ENCODE measurements at regions of chr9 and their contacts with region 1.

Region 1: GRCh38 chr9:79974806-79975422 is 403.1 kb downstream of the TLE4 start:
- DNase-seq: no peak
- ATAC-seq: no peak

Region 2: DNA sequence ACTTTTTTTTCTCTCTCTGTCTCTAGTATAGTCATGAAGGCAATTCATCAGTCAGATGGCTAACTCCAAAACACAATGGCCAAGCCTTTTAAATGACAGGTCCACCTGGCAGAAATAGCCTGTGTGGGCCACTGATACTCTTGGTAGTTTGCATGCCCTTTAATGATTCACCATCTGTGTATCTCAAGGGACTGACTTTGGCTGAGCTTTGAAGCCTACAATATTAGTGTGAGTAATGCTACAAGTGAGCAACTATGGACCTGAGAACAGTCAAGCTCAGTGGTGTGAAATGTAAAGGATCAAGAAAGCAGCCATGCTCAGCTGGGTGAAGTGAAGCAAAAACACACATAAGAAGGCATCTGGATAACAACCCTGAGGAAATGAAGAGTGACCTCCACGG is 1207.5 kb after region 1 on chr9:
- intact Hi-C with region 1: loop called (anchors 5 kb)
- DNase-seq: no peak
- ATAC-seq: no peak

Measured in sciatic nerve (tissue), 2 donors.